GM10248 (cell line): ENCODE measurements at regions of chr3 and their contacts with region 1.

Region 1: GRCh38 chr3:100254168-100254777 is 6.5 kb upstream of the TBC1D23 start:
- DNase-seq: peak; percentile 55
- CTCF ChIP-seq: peak; percentile 66

Region 2: GRCh38 chr3:99833617-99834205 is 420.6 kb before region 1 on chr3:
- CTCF ChIA-PET with region 1: interaction called, 50 read pairs
- POLR2A ChIA-PET with region 1: no interaction called
- DNase-seq: no peak
- CTCF ChIP-seq: no peak

Region 3: DNA sequence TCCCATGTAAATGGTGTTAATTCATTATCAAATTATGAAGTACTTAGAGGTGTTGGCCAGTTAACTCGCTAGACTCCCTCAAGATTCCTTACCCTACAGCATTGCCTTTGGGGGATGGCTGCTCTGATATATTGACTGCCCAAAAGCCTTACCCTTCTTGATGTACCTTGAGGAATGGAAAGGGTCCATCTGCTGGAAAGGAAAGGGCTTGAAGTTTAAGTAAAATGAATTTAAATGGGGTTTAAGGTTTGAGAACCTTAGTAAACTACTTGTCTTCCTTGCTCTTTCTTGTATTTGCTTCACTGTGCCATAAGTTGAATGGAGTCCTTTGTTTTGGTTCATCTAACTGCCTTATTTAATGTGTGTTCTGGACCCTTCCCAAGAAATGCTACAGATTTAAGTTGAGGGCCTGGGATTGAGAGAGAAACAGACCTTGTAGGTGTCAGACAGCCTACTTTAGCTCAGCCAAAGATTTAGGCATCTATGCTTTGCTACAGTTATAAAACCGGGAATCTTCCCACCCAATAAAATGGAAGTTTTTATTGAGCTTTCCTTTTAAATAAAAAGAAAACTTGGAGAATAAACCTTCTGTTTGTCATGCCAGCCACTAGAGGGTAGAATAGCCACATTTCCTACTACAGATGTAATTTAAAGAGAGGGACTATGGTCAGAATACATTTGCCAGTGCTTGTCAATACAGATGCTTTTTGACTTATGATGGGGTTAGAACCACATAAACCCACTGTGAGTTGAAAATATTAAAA is 411.3 kb before region 1 on chr3:
- CTCF ChIA-PET with region 1: interaction called, 39 read pairs
- POLR2A ChIA-PET with region 1: no interaction called
- DNase-seq: peak; percentile 23
- CTCF ChIP-seq: peak; percentile 60

Region 4: GRCh38 chr3:99850608-99851007 is 403.7 kb before region 1 on chr3:
- CTCF ChIA-PET with region 1: interaction called, 13 read pairs
- POLR2A ChIA-PET with region 1: no interaction called
- DNase-seq: no peak
- CTCF ChIP-seq: no peak

Region 5: DNA sequence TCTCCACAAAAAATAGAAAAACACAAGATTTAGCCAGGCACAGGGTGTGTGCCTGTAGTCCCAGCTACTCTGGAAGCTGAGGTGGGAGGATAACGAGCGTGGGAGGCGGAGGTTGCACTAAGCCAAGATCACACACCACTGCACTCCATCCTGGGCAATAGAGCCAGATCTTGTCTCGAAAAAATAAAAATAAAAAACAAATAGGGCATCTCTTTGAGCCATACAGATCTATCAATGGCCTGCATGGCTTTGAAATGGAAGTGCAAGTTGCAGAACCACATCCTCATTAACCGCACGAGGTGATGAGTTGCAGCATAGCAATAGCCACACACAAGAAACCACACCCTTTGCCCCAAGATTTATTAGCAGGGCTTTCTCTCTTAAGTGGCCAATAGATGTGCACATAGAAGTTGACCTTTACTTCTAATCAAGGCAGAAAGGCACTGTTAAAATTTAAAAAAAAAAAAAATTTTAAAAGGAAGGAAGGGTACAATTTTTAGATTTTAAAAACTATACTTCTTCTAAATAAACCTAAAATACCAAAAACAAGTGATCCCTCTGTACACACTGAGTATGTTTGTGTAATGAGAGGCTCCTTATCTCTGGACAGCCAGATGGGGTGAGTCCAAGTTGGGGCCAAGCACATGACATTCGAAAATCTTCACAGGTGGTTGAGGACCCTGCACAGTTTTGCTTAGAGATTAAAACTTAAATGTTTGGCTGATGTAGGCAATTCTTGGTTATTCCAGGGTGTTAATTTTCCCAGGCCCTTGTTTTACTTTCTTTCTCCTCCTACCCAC is 193.4 kb before region 1 on chr3:
- CTCF ChIA-PET with region 1: interaction called, 11 read pairs
- POLR2A ChIA-PET with region 1: no interaction called
- DNase-seq: no peak
- CTCF ChIP-seq: no peak

Region 6: GRCh38 chr3:100073899-100074307 is 180.4 kb before region 1 on chr3:
- CTCF ChIA-PET with region 1: interaction called, 37 read pairs
- POLR2A ChIA-PET with region 1: no interaction called
- DNase-seq: no peak
- CTCF ChIP-seq: no peak

Region 7: GRCh38 chr3:100537622-100538338 is 283.5 kb after region 1 on chr3:
- CTCF ChIA-PET with region 1: no interaction called
- POLR2A ChIA-PET with region 1: no interaction called
- DNase-seq: no peak
- CTCF ChIP-seq: no peak

Region 8: GRCh38 chr3:100606893-100607512 is 352.7 kb after region 1 on chr3:
- CTCF ChIA-PET with region 1: no interaction called
- POLR2A ChIA-PET with region 1: no interaction called
- DNase-seq: peak; percentile 21
- CTCF ChIP-seq: no peak